Activated naive CD8-positive, alpha-beta T cell treated with anti-CD3 and anti-CD28 coated beads, Interleukin-2, amount 10 ng/mL, durations not matched to agents 7 days and 5 days (primary cell): ENCODE measurements at regions of chr18 and their contacts with region 1.

Region 1: DNA sequence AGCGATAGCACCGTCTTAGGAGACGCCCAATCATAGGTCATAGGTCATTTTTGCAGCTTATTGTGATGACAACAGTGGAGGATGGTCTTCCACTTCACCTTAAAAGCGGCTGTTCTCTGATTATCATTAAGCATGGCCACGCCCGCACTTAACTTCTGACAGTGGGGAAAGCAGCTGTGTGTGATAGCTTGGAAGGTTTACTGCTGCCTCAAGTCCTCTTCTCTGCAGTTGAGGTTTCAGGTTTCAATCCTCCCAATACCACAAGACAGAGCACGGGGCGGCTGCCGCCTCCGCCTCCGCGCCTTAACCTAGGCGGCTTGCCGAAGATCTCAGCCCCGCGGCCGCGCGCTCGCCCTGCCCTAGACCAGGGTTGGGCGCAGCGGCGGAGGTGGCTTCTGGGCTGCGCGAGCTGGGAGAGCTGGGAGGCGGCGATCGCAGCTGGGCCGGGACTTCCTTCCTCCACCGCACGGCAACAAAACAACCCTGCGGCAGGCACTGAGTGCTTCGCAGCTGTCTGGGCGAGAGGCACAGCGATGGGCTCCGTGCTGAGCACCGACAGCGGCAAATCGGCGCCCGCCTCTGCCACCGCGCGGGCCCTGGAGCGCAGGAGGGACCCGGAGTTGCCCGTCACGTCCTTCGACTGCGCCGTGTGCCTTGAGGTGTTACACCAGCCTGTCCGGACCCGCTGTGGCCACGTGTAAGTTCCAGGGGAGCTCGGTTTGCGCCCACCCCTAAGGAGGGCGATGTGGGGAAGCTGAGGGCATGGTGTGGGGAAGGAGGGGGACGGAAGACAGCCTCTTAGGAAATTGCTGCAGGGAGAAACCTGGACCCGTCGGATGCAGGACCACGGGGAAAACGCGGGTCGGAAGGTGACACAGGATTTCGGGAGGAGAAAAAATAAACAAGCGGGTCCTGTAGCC is at the start of gene RNF125:
- DNase-seq: peak; percentile 93
- ATAC-seq: peak; percentile 81
- H3K4me3 Mint-ChIP-seq: peak within 1 kb of the TSS; percentile 86
- H3K27ac Mint-ChIP-seq: peak within 1 kb of the TSS; percentile 100
- H3K4me1 Mint-ChIP-seq: peaks cover 28% of the 10 kb centered on the region
- H3K27me3 Mint-ChIP-seq: no peaks in the 10 kb centered on the region
- total RNA-seq, gene RNF125: 29.0 to 31.2 TPM

Region 2: DNA sequence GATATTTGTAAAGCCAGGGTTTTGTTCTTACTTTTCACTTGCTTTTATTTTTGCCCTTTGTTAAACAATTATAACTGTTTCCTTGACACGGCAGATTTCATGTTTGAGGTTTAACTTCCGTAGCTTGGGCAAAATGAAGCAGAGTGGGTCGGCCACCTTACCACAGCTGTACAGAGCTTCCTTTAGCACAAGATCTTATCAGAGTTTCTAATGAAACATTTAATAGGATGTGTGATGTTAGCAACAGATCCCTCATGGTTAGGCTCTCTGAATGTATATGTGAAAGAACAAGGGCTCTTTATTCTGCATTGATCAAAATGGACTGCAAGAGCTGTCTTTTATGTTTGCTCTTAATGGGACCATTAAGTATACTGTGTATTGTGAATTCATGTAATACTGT is 22.3 kb after region 1 on chr18:
- POLR2A ChIA-PET with region 1: interaction called, 74 read pairs
- DNase-seq: no peak
- ATAC-seq: peak; percentile 95
- H3K4me3 Mint-ChIP-seq: peak overlapping the region; percentile 85
- H3K27ac Mint-ChIP-seq: peak overlapping the region; percentile 94
- H3K4me1 Mint-ChIP-seq: peaks cover 49% of the 10 kb centered on the region
- H3K27me3 Mint-ChIP-seq: no peaks in the 10 kb centered on the region

Region 3: DNA sequence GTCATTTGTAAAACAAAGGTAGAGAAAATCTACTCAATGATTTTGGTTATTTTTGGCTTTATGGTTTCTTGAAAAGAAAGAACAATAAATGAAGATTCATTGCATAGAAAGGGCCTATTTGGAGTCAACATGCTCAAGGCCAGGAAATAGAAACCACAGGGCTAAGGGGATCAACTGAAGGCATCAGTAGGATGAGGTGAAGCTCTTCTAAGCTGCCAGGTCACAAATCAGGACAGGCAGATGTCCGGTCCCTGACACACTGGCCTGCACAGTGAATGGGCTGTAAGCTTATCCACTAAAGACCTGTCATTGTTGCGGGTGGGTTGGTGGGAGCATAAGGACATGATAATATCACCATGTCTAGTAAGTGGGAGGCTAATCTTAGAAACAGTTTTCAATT is 41.4 kb after region 1 on chr18:
- POLR2A ChIA-PET with region 1: interaction called, 16 read pairs
- DNase-seq: no peak
- ATAC-seq: peak; percentile 78
- H3K4me3 Mint-ChIP-seq: no peak overlapping the region
- H3K27ac Mint-ChIP-seq: peak overlapping the region; percentile 44
- H3K4me1 Mint-ChIP-seq: peaks cover 33% of the 10 kb centered on the region
- H3K27me3 Mint-ChIP-seq: no peaks in the 10 kb centered on the region

Region 4: GRCh38 chr18:32086861-32087260 is 68.3 kb after region 1 on chr18:
- POLR2A ChIA-PET with region 1: interaction called, 114 read pairs
- DNase-seq: no peak
- ATAC-seq: no peak
- H3K4me3 Mint-ChIP-seq: no peak overlapping the region
- H3K27ac Mint-ChIP-seq: no peak overlapping the region
- H3K4me1 Mint-ChIP-seq: peaks cover 35% of the 10 kb centered on the region
- H3K27me3 Mint-ChIP-seq: no peaks in the 10 kb centered on the region